Activated CD4-positive, alpha-beta memory T cell treated with anti-CD3 and anti-CD28 coated beads for 36 hours (primary cell): ENCODE measurements at regions of chr6 and their contacts with region 1.

Region 1: DNA sequence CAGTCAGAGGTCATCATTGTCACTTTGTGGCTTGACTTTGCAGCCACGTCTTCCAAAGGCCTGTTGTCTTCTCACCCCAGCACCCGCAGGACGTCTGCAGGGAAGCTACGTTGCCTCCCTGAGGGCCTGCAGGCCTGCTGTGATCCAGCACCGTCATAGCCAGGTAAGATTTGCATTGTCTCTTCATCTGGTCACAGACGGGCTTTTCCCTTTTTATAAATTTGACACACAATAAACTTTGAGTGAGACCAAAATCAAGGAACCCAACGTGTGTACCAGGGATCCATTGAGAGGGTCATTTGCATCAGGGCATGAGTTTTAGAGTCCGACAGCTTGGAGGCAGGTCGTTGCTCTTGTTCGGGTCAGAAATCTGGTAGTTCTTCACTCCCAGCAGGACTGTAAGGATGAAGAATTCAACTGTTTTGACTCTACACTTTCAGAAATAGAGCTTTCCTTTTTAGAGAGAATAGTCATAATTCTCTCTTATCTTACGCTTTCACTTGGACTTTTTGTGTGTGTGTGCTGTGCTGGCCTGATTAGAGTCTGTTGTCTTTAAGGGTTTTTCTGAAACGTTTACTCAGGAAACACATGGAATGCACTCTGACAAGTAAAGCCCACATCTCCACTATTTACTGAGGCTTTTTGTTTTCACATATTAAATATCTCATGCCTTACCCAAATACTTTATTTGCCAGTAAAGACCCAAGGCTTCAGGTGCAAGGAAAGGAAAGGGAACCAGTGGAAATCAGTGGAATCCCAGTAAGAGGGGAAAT is 177.2 kb upstream of the TAB2 start:
- DNase-seq: peak; percentile 93
- H3K4me3 Mint-ChIP-seq: peak overlapping the region; percentile 78
- H3K27ac Mint-ChIP-seq: peak overlapping the region; percentile 96
- H3K4me1 Mint-ChIP-seq: peaks cover 58% of the 10 kb centered on the region
- H3K27me3 Mint-ChIP-seq: no peaks in the 10 kb centered on the region

Region 2: GRCh38 chr6:149082286-149082707 is 58.0 kb before region 1 on chr6:
- CTCF ChIA-PET with region 1: interaction called, 10 read pairs
- POLR2A ChIA-PET with region 1: interaction called, 9 read pairs
- intact Hi-C with region 1: loop called (anchors 1 kb)
- DNase-seq: peak; percentile 93
- H3K4me3 Mint-ChIP-seq: no peak overlapping the region
- H3K27ac Mint-ChIP-seq: peak overlapping the region; percentile 26
- H3K4me1 Mint-ChIP-seq: peaks cover 79% of the 10 kb centered on the region
- H3K27me3 Mint-ChIP-seq: no peaks in the 10 kb centered on the region

Region 3: GRCh38 chr6:149122850-149123821 is 17.2 kb before region 1 on chr6:
- CTCF ChIA-PET with region 1: interaction called, 4 read pairs
- POLR2A ChIA-PET with region 1: interaction called, 5 read pairs
- intact Hi-C with region 1: loop called (anchors 1 kb)
- DNase-seq: no peak
- H3K4me3 Mint-ChIP-seq: no peak overlapping the region
- H3K27ac Mint-ChIP-seq: peak overlapping the region; percentile 88
- H3K4me1 Mint-ChIP-seq: peaks cover 46% of the 10 kb centered on the region
- H3K27me3 Mint-ChIP-seq: no peaks in the 10 kb centered on the region

Region 4: DNA sequence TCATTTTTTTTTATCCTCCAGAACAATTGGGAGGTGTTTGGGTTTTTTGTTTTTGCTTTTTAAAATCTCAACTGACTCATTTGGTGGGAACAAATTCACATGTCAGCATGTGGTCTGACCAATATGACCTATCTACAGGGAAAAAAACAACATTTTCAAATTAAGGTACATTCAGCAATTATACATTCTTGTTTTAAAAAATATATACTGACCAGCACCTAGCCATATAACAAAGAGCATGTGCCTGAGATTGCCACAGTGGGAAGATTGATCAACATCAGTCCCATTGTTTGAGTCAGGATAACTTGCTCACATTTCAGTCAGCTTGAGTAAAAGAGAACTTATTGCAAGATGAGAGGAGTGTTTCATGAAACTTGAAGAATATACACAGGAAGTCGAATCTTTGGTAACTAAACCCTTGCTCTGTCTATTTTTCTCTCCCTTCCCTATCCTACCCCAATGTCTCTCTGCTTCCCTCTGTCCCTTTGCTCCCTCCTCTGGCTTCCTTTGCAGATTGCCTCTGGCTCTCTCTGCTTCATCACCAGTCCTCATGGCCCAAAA is 14.0 kb after region 1 on chr6:
- CTCF ChIA-PET with region 1: interaction called, 5 read pairs
- POLR2A ChIA-PET with region 1: interaction called, 16 read pairs
- intact Hi-C with region 1: loop called (anchors 2 kb)
- DNase-seq: no peak
- H3K4me3 Mint-ChIP-seq: no peak overlapping the region
- H3K27ac Mint-ChIP-seq: peak overlapping the region; percentile 88
- H3K4me1 Mint-ChIP-seq: peaks cover 62% of the 10 kb centered on the region
- H3K27me3 Mint-ChIP-seq: no peaks in the 10 kb centered on the region

Region 5: DNA sequence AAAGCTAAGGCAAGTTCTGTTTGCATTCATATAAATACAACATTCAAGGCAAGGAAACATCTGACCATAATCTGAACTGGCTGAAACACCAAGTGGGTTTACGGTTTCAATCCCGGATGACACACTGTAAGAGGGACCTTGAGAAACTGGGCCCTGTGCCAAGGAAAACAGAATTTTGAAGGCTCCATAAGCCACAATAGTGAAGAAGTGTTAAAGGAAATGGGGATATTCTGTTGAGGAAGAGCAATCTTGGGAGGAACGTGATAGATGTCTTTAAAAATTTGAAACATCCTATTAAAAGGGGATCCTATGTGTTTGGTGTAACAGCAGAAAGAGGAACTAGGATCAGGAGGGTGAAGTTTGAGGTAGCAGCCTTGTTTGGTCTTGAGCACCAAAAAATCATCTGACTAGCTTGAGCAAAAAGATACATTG is 94.8 kb after region 1 on chr6:
- CTCF ChIA-PET with region 1: no interaction called
- POLR2A ChIA-PET with region 1: no interaction called
- intact Hi-C with region 1: loop called (anchors 1 kb)
- DNase-seq: no peak
- H3K4me3 Mint-ChIP-seq: no peak overlapping the region
- H3K27ac Mint-ChIP-seq: peak overlapping the region; percentile 91
- H3K4me1 Mint-ChIP-seq: peaks cover 53% of the 10 kb centered on the region
- H3K27me3 Mint-ChIP-seq: no peaks in the 10 kb centered on the region

Region 6: GRCh38 chr6:149335924-149336608 is 195.7 kb after region 1 on chr6:
- CTCF ChIA-PET with region 1: no interaction called
- POLR2A ChIA-PET with region 1: interaction called, 4 read pairs
- intact Hi-C with region 1: loop called (anchors 1 kb)
- DNase-seq: peak; percentile 75
- H3K4me3 Mint-ChIP-seq: peak overlapping the region; percentile 62
- H3K27ac Mint-ChIP-seq: peak overlapping the region; percentile 95
- H3K4me1 Mint-ChIP-seq: peaks cover 86% of the 10 kb centered on the region
- H3K27me3 Mint-ChIP-seq: no peaks in the 10 kb centered on the region